CD8-positive, alpha-beta T cell (primary cell): ENCODE measurements at regions of chr13 and their contacts with region 1.

Region 1: DNA sequence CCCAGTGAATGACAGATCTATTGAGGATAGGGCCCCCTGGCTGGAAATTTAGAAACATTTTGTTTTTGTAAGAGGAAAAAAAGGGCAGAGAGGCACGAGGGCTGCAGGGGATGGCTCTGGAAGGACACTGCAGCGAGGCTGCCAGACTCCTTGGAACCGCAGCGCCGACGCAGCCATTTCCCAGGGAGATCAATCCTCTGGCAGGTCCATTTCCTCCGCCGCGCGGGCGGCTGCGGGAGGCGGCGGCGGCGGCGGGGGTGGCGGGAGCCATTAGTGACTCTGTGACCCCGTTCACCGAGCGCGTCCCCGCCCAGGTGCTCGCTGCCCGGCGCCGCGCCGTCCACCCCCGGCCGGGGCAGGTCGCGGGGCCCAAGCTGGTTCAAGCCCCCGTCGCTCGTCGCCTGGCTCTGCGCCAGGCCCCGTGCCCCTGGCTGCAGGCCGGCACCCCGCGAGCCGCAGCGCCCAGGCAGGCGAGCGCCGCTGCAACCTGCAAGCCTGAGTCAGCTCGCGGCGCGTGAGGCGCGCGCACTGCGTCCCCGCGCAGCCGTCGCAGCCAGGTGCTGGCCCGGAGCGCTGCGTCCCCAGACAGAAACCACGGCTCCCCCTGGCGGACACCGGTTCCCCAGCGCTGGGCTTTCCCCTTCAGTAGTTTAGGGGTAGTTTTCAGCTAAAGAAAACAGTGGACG is 192.6 kb downstream of the KATNAL1 start:
- DNase-seq: peak; percentile 90 to 97 (median 94)
- ATAC-seq: peak; percentile 92
- H3K4me3 ChIP-seq: peak overlapping the region; percentile 45 to 61
- H3K4me3 Mint-ChIP-seq: peak overlapping the region; percentile 85
- H3K27ac ChIP-seq: no peak overlapping the region
- H3K27ac Mint-ChIP-seq: peak overlapping the region; percentile 92
- H3K4me1 ChIP-seq: peaks cover 15% of the 10 kb centered on the region
- H3K4me1 Mint-ChIP-seq: peaks cover 30% of the 10 kb centered on the region
- H3K27me3 ChIP-seq: no peaks in the 10 kb centered on the region
- H3K27me3 Mint-ChIP-seq: no peaks in the 10 kb centered on the region
- CTCF ChIP-seq: peak; percentile 91

Region 2: DNA sequence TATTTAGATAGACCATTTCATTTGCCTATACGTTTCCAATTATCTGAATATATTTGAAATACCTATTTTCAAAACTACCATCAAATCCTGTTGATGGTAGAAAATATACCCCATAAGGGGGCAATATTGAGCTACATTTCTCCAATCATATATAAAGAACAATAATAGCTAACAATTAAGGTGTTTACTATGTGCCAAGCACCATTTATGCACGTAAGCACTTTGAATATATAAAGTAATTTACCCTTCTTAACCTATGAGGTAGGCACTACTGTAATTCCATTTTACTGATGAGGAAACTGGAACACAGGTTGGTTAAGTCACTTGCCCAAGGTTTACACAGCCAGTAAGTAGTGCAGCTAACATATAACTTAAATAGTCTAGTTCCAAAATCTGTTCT is 343.5 kb before region 1 on chr13:
- CTCF ChIA-PET with region 1: interaction called, 301 read pairs
- POLR2A ChIA-PET with region 1: interaction called, 16 read pairs
- intact Hi-C with region 1: loop called (anchors 1 kb)
- DNase-seq: peak in 2 of 9 experiments; percentile 55 to 68
- ATAC-seq: peak; percentile 65
- H3K4me3 ChIP-seq: no peak overlapping the region
- H3K4me3 Mint-ChIP-seq: no peak overlapping the region
- H3K27ac ChIP-seq: no peak overlapping the region
- H3K27ac Mint-ChIP-seq: no peak overlapping the region
- H3K4me1 ChIP-seq: no peaks in the 10 kb centered on the region
- H3K4me1 Mint-ChIP-seq: no peaks in the 10 kb centered on the region
- H3K27me3 ChIP-seq: no peaks in the 10 kb centered on the region
- H3K27me3 Mint-ChIP-seq: no peaks in the 10 kb centered on the region
- CTCF ChIP-seq: peak; percentile 77

Region 3: GRCh38 chr13:29935309-29935981 is 179.3 kb before region 1 on chr13:
- CTCF ChIA-PET with region 1: interaction called, 132 read pairs
- POLR2A ChIA-PET with region 1: interaction called, 36 read pairs
- intact Hi-C with region 1: loop called (anchors 1 to 2 kb)
- DNase-seq: peak; percentile 40 to 90 (median 74)
- ATAC-seq: peak; percentile 95
- H3K4me3 ChIP-seq: peak overlapping the region; percentile 40 to 51
- H3K4me3 Mint-ChIP-seq: peak overlapping the region; percentile 86
- H3K27ac ChIP-seq: peak overlapping the region; percentile 29 to 47
- H3K27ac Mint-ChIP-seq: peak overlapping the region; percentile 96
- H3K4me1 ChIP-seq: peaks cover 44% of the 10 kb centered on the region
- H3K4me1 Mint-ChIP-seq: peaks cover 50% of the 10 kb centered on the region
- H3K27me3 ChIP-seq: no peaks in the 10 kb centered on the region
- H3K27me3 Mint-ChIP-seq: no peaks in the 10 kb centered on the region
- CTCF ChIP-seq: no peak

Region 4: DNA sequence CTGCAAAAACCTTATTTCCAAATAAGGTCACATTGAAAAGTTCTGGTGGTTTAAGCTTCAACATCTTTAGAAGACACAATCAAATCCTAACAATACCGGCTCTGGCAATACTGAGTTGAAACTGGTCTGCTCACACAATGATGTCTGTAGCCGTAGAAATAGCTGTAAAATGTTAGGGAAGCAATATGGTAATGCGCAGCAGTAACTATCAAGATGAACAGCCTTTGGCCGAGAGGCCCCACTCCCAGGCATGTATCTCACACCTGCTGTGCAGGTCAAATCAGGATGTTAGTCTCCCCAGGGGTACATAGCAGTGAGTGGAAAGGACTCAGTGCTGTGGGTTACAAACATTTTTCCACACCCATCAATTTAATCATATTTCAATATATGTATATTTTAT is 14.5 kb before region 1 on chr13:
- CTCF ChIA-PET with region 1: interaction called, 12 read pairs
- POLR2A ChIA-PET with region 1: interaction called, 3 read pairs
- intact Hi-C with region 1: no loop called
- DNase-seq: no peak
- ATAC-seq: no peak
- H3K4me3 ChIP-seq: no peak overlapping the region
- H3K4me3 Mint-ChIP-seq: no peak overlapping the region
- H3K27ac ChIP-seq: no peak overlapping the region
- H3K27ac Mint-ChIP-seq: no peak overlapping the region
- H3K4me1 ChIP-seq: no peaks in the 10 kb centered on the region
- H3K4me1 Mint-ChIP-seq: no peaks in the 10 kb centered on the region
- H3K27me3 ChIP-seq: no peaks in the 10 kb centered on the region
- H3K27me3 Mint-ChIP-seq: peaks cover 3% of the 10 kb centered on the region
- CTCF ChIP-seq: no peak

Region 5: DNA sequence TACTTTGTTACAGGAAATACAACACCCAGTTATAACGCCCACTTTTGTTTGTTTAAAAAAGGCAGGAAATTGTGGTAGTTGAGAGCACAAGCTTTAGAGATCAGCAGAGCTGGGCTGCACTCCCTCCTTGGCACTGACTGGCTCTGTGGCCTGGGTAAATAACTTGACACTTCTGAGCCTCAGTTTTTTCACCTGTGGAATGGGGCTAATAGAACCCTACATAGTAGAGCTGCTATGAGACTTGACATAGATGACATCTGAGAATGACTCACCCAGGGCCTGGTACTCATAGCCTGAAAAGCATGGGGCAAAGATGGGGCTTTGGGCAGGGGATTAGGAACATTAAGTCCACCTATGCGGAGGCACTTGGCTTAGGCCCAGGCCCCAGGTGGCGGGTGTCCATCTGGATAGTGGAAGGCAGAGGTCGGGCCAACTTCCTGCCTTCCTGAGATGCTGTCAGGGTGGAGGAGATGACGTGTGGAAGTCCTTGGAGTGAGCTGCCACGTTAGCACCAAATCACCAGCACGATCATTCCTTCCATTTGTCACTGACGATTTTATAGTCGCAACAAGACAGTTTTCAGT is 33.5 kb after region 1 on chr13:
- CTCF ChIA-PET with region 1: interaction called, 630 read pairs
- POLR2A ChIA-PET with region 1: interaction called, 4 read pairs
- intact Hi-C with region 1: no loop called
- DNase-seq: peak; percentile 16 to 91 (median 55)
- ATAC-seq: peak; percentile 79
- H3K4me3 ChIP-seq: no peak overlapping the region
- H3K4me3 Mint-ChIP-seq: peak overlapping the region; percentile 67
- H3K27ac ChIP-seq: peak overlapping the region; percentile 34 to 85
- H3K27ac Mint-ChIP-seq: peak overlapping the region; percentile 95
- H3K4me1 ChIP-seq: peaks cover 73% of the 10 kb centered on the region
- H3K4me1 Mint-ChIP-seq: peaks cover 83% of the 10 kb centered on the region
- H3K27me3 ChIP-seq: no peaks in the 10 kb centered on the region
- H3K27me3 Mint-ChIP-seq: no peaks in the 10 kb centered on the region
- CTCF ChIP-seq: no peak

Region 6: DNA sequence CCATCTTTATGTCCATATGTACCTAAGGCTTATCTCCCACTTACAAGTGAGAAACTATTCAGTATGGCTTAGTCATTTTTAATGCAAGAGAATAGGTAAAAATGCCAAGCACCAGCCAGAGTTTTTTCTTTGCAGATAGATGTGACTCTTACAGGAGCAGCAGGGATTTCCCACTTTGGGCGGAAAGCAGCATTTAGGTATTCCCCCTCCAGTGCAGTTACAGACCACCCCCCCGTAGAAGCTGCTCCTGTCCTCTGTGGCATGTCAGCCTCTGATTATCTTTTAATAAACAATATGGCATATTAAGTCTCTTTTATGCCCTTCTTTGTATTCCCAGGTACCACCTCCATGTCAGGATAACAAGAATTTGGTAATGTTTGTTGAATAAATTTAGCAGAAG is 478.3 kb after region 1 on chr13:
- CTCF ChIA-PET with region 1: no interaction called
- POLR2A ChIA-PET with region 1: no interaction called
- intact Hi-C with region 1: no loop called
- DNase-seq: no peak
- ATAC-seq: no peak
- H3K4me3 ChIP-seq: no peak overlapping the region
- H3K4me3 Mint-ChIP-seq: no peak overlapping the region
- H3K27ac ChIP-seq: no peak overlapping the region
- H3K27ac Mint-ChIP-seq: no peak overlapping the region
- H3K4me1 ChIP-seq: no peaks in the 10 kb centered on the region
- H3K4me1 Mint-ChIP-seq: no peaks in the 10 kb centered on the region
- H3K27me3 ChIP-seq: no peaks in the 10 kb centered on the region
- H3K27me3 Mint-ChIP-seq: peaks cover 2% of the 10 kb centered on the region
- CTCF ChIP-seq: no peak